Activated CD4-positive, alpha-beta T cell treated with anti-CD3 and anti-CD28 coated beads, Interleukin-2, amount 10 ng/mL, durations not matched to agents 24 days and 14 days (primary cell): ENCODE measurements at regions of chr6 and their contacts with region 1.

Region 1: GRCh38 chr6:20401205-20402091 is at the start of gene E2F3:
- DNase-seq: peak; percentile 100
- H3K4me3 Mint-ChIP-seq: peak within 1 kb of the TSS; percentile 94
- H3K27ac Mint-ChIP-seq: peak within 1 kb of the TSS; percentile 99
- H3K4me1 Mint-ChIP-seq: peaks cover 27% of the 10 kb centered on the region
- H3K27me3 Mint-ChIP-seq: no peaks in the 10 kb centered on the region
- total RNA-seq, gene E2F3: 27.1 and 28.0 TPM in 2 replicates

Region 2: DNA sequence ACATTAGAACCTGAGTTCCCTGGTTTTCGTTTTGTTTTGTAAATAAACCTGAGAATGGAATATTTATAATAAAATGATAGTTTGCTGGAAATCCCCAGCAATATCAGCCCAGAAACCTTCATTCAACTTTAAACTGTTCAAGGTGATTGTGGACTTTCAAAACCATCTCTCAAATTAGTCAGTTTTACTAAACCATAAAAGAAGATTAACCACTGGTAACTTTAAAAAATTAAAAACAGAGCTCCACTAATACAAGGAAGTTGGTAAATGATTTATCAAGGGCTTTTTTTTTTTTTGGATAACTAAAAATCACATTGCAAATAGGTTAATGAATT is 199.2 kb before region 1 on chr6:
- intact Hi-C with region 1: loop called (anchors 2 kb)
- DNase-seq: no peak
- H3K4me3 Mint-ChIP-seq: no peak overlapping the region
- H3K27ac Mint-ChIP-seq: peak overlapping the region; percentile 21
- H3K4me1 Mint-ChIP-seq: peaks cover 57% of the 10 kb centered on the region
- H3K27me3 Mint-ChIP-seq: no peaks in the 10 kb centered on the region

Region 3: DNA sequence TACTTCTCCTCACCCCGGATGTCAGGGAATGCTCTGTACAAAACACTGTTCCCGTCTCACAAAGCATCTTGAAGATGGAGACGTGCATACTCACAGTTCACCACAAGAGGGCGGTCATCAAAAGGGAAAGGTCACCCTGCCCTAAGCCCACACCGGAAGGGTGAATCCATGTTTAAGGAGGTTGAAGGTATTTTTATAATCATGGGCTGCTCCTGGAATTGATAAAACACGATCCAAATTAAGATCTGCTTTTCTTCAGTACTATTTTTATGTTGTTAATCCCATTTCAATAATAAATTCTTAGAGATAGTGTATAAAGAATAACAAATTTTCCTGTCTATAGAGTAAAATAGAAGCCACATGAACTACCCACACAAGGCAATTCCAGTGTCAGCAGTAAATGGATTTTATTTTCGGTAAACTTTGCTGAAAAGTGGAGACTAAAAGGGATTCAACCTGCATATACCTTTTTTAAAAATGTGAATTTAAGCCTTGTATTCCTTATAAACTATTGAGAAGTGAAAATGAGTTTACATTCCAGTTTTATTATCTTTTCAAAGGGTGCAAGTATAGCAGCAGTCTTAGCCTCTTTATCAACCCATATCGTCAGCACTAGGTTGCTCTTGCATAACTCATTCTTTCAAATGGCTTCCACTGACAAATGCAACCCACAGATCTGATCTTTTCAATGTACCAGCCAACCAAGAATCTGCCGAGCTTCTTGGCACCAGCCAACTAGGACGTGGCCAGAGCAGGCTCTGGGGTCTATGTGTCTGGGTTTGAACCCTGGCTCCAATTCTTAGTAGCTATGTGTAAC is 109.5 kb before region 1 on chr6:
- intact Hi-C with region 1: loop called (anchors 1 kb)
- DNase-seq: peak; percentile 93
- H3K4me3 Mint-ChIP-seq: peak overlapping the region; percentile 9
- H3K27ac Mint-ChIP-seq: peak overlapping the region; percentile 2
- H3K4me1 Mint-ChIP-seq: peaks cover 35% of the 10 kb centered on the region
- H3K27me3 Mint-ChIP-seq: peaks cover 7% of the 10 kb centered on the region

Region 4: GRCh38 chr6:20366091-20366832 is 35.2 kb before region 1 on chr6:
- intact Hi-C with region 1: loop called (anchors 1 kb)
- DNase-seq: peak; percentile 83
- H3K4me3 Mint-ChIP-seq: peak overlapping the region; percentile 73
- H3K27ac Mint-ChIP-seq: peak overlapping the region; percentile 96
- H3K4me1 Mint-ChIP-seq: peaks cover 55% of the 10 kb centered on the region
- H3K27me3 Mint-ChIP-seq: no peaks in the 10 kb centered on the region

Region 5: GRCh38 chr6:20427856-20428255 is 26.4 kb after region 1 on chr6:
- intact Hi-C with region 1: no loop called
- DNase-seq: no peak
- H3K4me3 Mint-ChIP-seq: no peak overlapping the region
- H3K27ac Mint-ChIP-seq: no peak overlapping the region
- H3K4me1 Mint-ChIP-seq: peaks cover 17% of the 10 kb centered on the region
- H3K27me3 Mint-ChIP-seq: no peaks in the 10 kb centered on the region

Region 6: GRCh38 chr6:20534295-20535262 is 133.1 kb after region 1 on chr6 and contains the start of gene CDKAL1:
- intact Hi-C with region 1: loop called (anchors 1 kb)
- DNase-seq: peak; percentile 97
- H3K4me3 Mint-ChIP-seq: peak within 1 kb of the TSS; percentile 96
- H3K27ac Mint-ChIP-seq: peak within 1 kb of the TSS; percentile 95
- H3K4me1 Mint-ChIP-seq: peaks cover 37% of the 10 kb centered on the region
- H3K27me3 Mint-ChIP-seq: peaks cover 2% of the 10 kb centered on the region
- total RNA-seq, gene CDKAL1: 28.5 and 29.1 TPM in 2 replicates

Region 7: GRCh38 chr6:21438237-21438985 is 1037.0 kb after region 1 on chr6:
- intact Hi-C with region 1: loop called (anchors 1 kb)
- DNase-seq: peak; percentile 79
- H3K4me3 Mint-ChIP-seq: peak overlapping the region; percentile 66
- H3K27ac Mint-ChIP-seq: peak overlapping the region; percentile 76
- H3K4me1 Mint-ChIP-seq: peaks cover 15% of the 10 kb centered on the region
- H3K27me3 Mint-ChIP-seq: peaks cover 25% of the 10 kb centered on the region